K562 (cell line): ENCODE measurements at regions of chr5 and their contacts with region 1.

Region 1: DNA sequence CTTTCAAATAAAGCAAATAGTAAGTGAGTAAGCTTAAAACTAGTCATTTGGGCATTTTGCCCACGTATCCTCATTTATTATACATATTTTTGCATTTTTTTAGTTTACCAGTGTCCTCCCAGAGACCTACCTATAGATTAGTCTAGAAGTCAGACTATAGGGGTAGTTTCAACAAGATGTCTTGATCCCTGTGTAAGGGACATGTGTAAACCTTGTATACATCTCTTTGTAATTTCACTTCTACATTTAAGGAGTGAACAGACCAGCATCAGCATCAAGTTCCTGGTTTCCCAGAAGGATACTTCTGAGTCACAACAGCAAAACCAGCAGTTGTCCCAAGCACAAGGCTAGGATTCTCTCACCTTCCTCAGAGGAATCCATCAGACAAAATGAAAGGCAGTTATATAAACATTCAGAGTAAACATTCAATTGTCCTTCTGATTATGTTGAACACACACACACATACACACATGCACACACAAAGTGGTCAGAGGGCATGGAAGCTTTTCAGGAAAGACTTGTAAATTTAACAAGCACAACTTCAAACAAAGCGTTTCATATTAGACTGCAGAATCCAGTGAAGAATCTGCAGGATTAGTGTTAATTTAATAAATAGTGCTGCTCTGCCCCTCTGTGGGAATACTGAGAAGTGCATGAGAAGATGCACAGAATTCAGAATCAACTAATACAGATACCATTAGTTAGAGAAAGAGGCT is 55.4 kb downstream of the HINT1 start:
- DNase-seq: peak; percentile 18 to 47 (median 31)
- ATAC-seq: peak; percentile 87
- H3K4me3 ChIP-seq: no peak overlapping the region
- H3K27ac ChIP-seq: no peak overlapping the region
- H3K4me1 ChIP-seq: no peaks in the 10 kb centered on the region; a peak in 1 of 5 replicates
- H3K27me3 ChIP-seq: no peaks in the 10 kb centered on the region
- CTCF ChIP-seq: peak; percentile 53 to 80 (median 63); a peak in 5 of 6 replicates
- EP300 ChIP-seq: no peak
- POLR2A ChIP-seq: no peak
- RAD21 ChIP-seq: peak; percentile 79 to 92

Region 2: DNA sequence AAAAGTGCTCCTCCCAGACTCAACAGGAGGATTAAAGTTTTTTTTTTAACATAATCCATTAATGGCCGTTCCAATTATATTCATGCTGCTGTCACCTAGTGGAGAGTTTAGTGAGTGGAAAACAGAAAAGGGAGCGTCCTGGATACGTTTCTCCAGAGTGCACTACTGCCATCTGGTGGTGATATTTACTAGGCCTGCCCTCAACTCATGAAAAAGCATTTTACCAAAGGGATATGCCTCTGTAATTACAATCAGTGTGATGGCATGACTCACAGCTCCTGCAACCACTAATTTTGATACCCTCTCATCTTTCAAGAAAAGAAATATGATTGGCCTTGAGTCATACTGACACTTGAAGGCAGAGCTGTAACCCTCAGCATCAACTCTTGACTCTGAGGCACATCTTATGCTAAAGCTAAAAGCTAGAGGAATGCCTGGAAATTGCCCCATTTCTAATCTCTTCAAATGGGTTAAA is 1341.8 kb before region 1 on chr5:
- CTCF ChIA-PET with region 1: interaction called, 3 read pairs
- POLR2A ChIA-PET with region 1: no interaction called
- in situ Hi-C with region 1: no loop called
- intact Hi-C with region 1: loop called (anchors 1 kb)
- DNase-seq: peak; percentile 58 to 85 (median 74)
- ATAC-seq: peak; percentile 99
- H3K4me3 ChIP-seq: no peak overlapping the region
- H3K27ac ChIP-seq: no peak overlapping the region
- H3K4me1 ChIP-seq: no peaks in the 10 kb centered on the region
- H3K27me3 ChIP-seq: no peaks in the 10 kb centered on the region
- CTCF ChIP-seq: peak; percentile 93 to 99 (median 98)
- EP300 ChIP-seq: no peak
- POLR2A ChIP-seq: no peak
- RAD21 ChIP-seq: peak; percentile 89 to 96

Region 3: GRCh38 chr5:130109152-130109551 is 1000.5 kb before region 1 on chr5:
- CTCF ChIA-PET with region 1: no interaction called
- POLR2A ChIA-PET with region 1: no interaction called
- in situ Hi-C with region 1: no loop called
- intact Hi-C with region 1: loop called (anchors 10 kb)
- DNase-seq: peak in 1 of 4 experiments; percentile 4
- ATAC-seq: no peak
- H3K4me3 ChIP-seq: no peak overlapping the region
- H3K27ac ChIP-seq: no peak overlapping the region
- H3K4me1 ChIP-seq: no peaks in the 10 kb centered on the region
- H3K27me3 ChIP-seq: no peaks in the 10 kb centered on the region
- CTCF ChIP-seq: peak in 1 of 3 experiments; percentile 27; a peak in 2 of 6 replicates
- EP300 ChIP-seq: no peak
- POLR2A ChIP-seq: no peak
- RAD21 ChIP-seq: peak; percentile 34 to 50

Region 4: DNA sequence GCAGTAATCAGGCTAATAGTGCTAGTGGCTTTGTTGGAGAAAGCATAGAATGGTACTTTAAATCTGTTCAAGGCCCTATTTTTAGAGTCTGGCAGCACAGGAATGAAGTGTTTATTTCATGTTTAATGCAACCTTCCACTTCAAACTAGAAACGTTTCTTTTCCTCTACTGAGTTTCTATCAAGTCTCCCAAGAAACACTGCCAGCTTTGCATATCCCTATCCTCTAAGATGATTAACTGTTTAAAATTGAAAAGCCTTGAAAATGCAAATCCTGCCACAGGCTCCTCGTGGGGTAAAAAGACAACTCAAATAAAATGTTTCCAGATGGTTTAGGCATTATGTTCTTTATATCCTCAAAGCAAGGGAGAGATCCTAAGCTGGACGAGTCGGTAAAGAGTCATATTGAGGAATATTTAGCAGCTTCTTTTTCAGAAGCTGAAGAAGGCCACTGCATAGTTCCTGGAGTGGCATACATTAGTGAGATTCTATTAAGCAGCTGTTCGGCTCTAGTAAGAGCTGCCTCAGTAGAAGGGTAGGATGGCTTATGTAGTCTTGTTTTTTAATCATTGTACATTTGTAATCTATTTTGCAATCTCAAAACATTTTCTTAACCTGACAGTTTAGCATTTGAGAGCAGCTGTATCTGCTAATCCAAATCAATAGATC is 954.2 kb before region 1 on chr5:
- CTCF ChIA-PET with region 1: no interaction called
- POLR2A ChIA-PET with region 1: no interaction called
- in situ Hi-C with region 1: no loop called
- intact Hi-C with region 1: no loop called
- DNase-seq: no peak
- ATAC-seq: no peak
- H3K4me3 ChIP-seq: no peak overlapping the region
- H3K27ac ChIP-seq: no peak overlapping the region
- H3K4me1 ChIP-seq: no peaks in the 10 kb centered on the region
- H3K27me3 ChIP-seq: no peaks in the 10 kb centered on the region
- CTCF ChIP-seq: no peak
- EP300 ChIP-seq: no peak
- POLR2A ChIP-seq: no peak
- RAD21 ChIP-seq: no peak

Region 5: GRCh38 chr5:130992095-130992494 is 117.6 kb before region 1 on chr5:
- CTCF ChIA-PET with region 1: no interaction called
- POLR2A ChIA-PET with region 1: no interaction called
- in situ Hi-C with region 1: no loop called
- intact Hi-C with region 1: no loop called
- DNase-seq: no peak
- ATAC-seq: no peak
- H3K4me3 ChIP-seq: no peak overlapping the region
- H3K27ac ChIP-seq: no peak overlapping the region
- H3K4me1 ChIP-seq: peaks cover 0 to 15% of the 10 kb centered on the region in 2 experiments; a peak in 2 of 5 replicates
- H3K27me3 ChIP-seq: peaks cover 19 to 31% of the 10 kb centered on the region in 2 experiments; a peak in 4 of 5 replicates
- CTCF ChIP-seq: no peak
- EP300 ChIP-seq: no peak
- POLR2A ChIP-seq: no peak
- RAD21 ChIP-seq: no peak

Region 6: GRCh38 chr5:131005963-131006684 is 103.6 kb before region 1 on chr5:
- CTCF ChIA-PET with region 1: no interaction called
- POLR2A ChIA-PET with region 1: no interaction called
- in situ Hi-C with region 1: no loop called
- intact Hi-C with region 1: loop called (anchors 5 kb)
- DNase-seq: no peak
- ATAC-seq: peak; percentile 37; the same call in 1 of the 3 replicates
- H3K4me3 ChIP-seq: no peak overlapping the region
- H3K27ac ChIP-seq: no peak overlapping the region
- H3K4me1 ChIP-seq: 0 out of 5 replicates have a peak, but pooled peaks cover 0 to 3% of the 10 kb centered on the region in 2 experiments
- H3K27me3 ChIP-seq: peaks cover 2 to 6% of the 10 kb centered on the region in 2 experiments; a peak in 2 of 5 replicates
- CTCF ChIP-seq: peak in 2 of 3 experiments; percentile 12 to 24; a peak in 1 of 6 replicates
- EP300 ChIP-seq: no peak
- POLR2A ChIP-seq: no peak
- RAD21 ChIP-seq: peak in 1 of 2 experiments; percentile 35; a peak in 2 of 4 replicates

Region 7: GRCh38 chr5:131417240-131417869 is 307.7 kb after region 1 on chr5:
- CTCF ChIA-PET with region 1: no interaction called
- POLR2A ChIA-PET with region 1: no interaction called
- in situ Hi-C with region 1: no loop called
- intact Hi-C with region 1: loop called (anchors 5 kb)
- DNase-seq: peak; percentile 60 to 83 (median 60)
- ATAC-seq: peak; percentile 88
- H3K4me3 ChIP-seq: no peak overlapping the region
- H3K27ac ChIP-seq: no peak overlapping the region
- H3K4me1 ChIP-seq: no peaks in the 10 kb centered on the region
- H3K27me3 ChIP-seq: no peaks in the 10 kb centered on the region
- CTCF ChIP-seq: peak; percentile 63 to 85 (median 74)
- EP300 ChIP-seq: no peak
- POLR2A ChIP-seq: no peak
- RAD21 ChIP-seq: peak; percentile 77 to 87